ENCODE measurements at regions of chr2 and their contacts with region 1.

Region 1: GRCh38 chr2:200850512-200851256 is 13.8 kb downstream of the CLK1 start:
- DNase-seq: no peak
- ATAC-seq: no peak
- H3K4me3 ChIP-seq: no peak overlapping the region
- H3K27ac ChIP-seq: no peak overlapping the region
- H3K4me1 ChIP-seq: no peaks in the 10 kb centered on the region
- H3K27me3 ChIP-seq: no peaks in the 10 kb centered on the region
- CTCF ChIP-seq: no peak

Region 2: DNA sequence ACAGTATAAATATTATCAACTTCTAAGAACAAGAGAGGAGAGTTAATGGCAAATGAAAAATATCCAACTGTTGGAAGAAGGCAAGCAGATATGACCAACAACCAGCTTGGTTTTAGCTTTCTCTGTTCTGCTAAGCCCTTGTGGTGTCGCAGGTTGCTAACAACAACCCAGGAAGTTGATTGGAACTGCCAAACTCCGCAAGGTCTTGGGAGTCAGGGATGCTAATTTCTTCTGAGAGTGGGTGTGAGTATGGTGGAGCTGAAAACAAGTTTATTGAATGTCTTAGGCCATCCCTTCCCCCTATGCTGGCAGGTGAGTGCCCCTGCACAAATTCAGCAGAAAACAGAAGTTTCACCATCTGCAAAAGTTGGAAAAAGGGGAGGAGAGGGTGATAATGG is 21.4 kb before region 1 on chr2:
- CTCF ChIA-PET with region 1: no interaction called
- POLR2A ChIA-PET with region 1: interaction called, 15 read pairs
- intact Hi-C with region 1: no loop called
- DNase-seq: peak; percentile 22
- ATAC-seq: peak; percentile 6
- H3K4me3 ChIP-seq: no peak overlapping the region
- H3K27ac ChIP-seq: no peak overlapping the region
- H3K4me1 ChIP-seq: no peaks in the 10 kb centered on the region
- H3K27me3 ChIP-seq: no peaks in the 10 kb centered on the region
- CTCF ChIP-seq: no peak

Region 3: DNA sequence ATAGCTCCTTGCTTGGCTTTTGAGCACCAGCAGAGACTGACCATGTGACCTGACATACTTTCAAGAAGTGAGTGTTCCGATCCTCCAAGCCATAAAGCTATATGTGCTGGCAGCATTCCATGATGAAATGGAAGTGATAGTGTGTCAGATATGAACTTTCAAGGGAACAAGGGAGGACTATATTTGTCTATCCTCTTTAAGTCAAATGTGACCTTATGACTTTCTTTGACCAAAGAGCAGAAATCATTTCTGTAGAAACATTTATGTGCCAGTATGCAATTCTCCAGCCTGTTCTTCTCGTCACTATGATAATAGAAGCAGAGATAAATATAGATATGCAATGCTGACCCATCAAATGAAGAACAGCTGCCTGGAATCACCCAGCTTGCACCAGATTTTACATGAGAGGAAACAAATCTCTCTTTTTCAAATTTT is 206.4 kb after region 1 on chr2:
- CTCF ChIA-PET with region 1: no interaction called
- POLR2A ChIA-PET with region 1: no interaction called
- intact Hi-C with region 1: no loop called
- DNase-seq: no peak
- ATAC-seq: no peak
- H3K4me3 ChIP-seq: no peak overlapping the region
- H3K27ac ChIP-seq: no peak overlapping the region
- H3K4me1 ChIP-seq: no peaks in the 10 kb centered on the region
- H3K27me3 ChIP-seq: no peaks in the 10 kb centered on the region
- CTCF ChIP-seq: no peak

Measured in PC-3 (cell line).